MCF 10A (cell line): ENCODE measurements at regions of chr6 and their contacts with region 1.

Region 1: GRCh38 chr6:27146706-27147505 is 100.6 kb upstream of the PRSS16 start:
- DNase-seq: peak; percentile 99
- H3K4me3 Mint-ChIP-seq: no peak overlapping the region
- H3K27ac Mint-ChIP-seq: no peak overlapping the region
- H3K4me1 Mint-ChIP-seq: no peaks in the 10 kb centered on the region
- H3K27me3 Mint-ChIP-seq: no peaks in the 10 kb centered on the region
- CTCF ChIP-seq: no peak

Region 2: GRCh38 chr6:26045065-26045927 is 1101.6 kb before region 1 on chr6:
- CTCF ChIA-PET with region 1: no interaction called
- POLR2A ChIA-PET with region 1: interaction called, 12 read pairs
- intact Hi-C with region 1: no loop called
- DNase-seq: peak; percentile 95
- H3K4me3 Mint-ChIP-seq: peak overlapping the region; percentile 80
- H3K27ac Mint-ChIP-seq: peak overlapping the region; percentile 86
- H3K4me1 Mint-ChIP-seq: peaks cover 16% of the 10 kb centered on the region
- H3K27me3 Mint-ChIP-seq: no peaks in the 10 kb centered on the region
- CTCF ChIP-seq: no peak

Region 3: DNA sequence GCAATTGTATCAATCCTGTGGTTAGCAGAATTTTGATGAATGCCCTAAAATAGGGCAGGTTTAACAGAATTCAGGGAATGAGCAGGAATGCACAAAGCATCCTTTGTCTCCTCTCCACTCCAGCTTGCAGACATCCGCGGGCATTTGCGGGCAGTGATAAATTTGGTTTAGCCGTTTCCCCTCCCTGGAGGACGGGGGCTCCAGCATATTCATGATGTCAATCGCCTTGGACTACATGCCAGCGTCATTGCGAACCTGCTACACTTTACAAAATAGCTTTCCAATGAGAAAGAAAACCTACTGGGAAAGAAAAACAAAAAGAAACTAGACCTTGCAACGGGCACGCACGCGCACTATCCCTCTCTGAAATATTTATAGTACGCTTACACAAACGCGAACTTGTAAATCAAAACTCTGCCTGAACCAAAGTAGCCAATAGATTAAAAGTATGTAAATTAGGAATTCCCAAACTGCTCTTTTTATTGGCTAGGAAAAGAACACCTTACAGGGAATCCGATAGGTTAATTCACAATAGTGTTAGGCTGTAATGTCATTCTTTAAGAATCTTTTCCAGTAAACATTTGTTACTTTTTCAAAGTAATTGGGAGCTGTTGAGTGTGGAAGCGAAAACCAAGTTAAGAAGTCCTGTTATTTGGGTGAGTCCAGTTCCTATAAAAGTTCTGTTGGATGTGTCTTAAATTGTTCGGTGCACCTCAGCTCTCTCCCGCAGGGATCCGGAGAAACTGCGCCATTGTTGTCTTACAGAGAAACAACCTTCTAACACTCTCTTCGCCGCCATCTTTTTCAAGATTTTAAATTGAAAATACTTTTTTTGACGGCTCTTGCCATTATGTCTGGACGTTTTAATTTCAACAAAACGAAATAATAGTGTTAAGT is 923.0 kb before region 1 on chr6:
- CTCF ChIA-PET with region 1: no interaction called
- POLR2A ChIA-PET with region 1: interaction called, 16 read pairs
- intact Hi-C with region 1: loop called (anchors 5 kb)
- DNase-seq: peak; percentile 91
- H3K4me3 Mint-ChIP-seq: no peak overlapping the region
- H3K27ac Mint-ChIP-seq: no peak overlapping the region
- H3K4me1 Mint-ChIP-seq: peaks cover 6% of the 10 kb centered on the region
- H3K27me3 Mint-ChIP-seq: no peaks in the 10 kb centered on the region
- CTCF ChIP-seq: no peak

Region 4: DNA sequence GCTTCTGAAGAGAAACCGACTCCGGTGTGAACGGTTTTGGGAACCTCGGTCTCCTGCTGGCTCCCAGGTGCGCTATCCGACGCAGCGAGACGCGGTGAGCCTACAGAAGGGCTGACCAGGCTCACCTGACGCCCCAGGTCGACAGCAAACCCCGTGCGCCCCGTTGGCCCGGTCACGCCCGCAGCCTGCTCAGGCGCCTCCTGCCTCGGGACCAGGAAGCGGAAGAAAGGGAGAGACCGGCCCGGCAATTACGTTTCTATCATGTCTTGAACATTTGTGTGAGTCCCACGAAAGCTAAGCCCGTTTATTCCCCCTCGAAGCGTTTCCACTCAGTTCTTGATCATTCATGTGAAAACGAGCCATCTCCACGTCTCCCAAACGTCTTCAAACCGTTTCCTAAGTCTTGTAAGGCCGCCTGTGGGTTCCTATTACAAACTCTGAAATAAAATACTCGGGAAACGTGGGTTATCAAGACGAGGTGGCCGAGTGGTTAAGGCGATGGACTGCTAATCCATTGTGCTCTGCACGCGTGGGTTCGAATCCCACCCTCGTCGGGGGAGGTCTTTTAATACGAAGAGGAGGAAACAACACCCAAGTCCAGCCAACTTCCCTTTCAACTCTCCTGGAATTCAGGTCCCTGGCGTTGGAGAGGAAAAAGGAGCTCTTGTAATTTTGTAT is 49.9 kb before region 1 on chr6:
- CTCF ChIA-PET with region 1: no interaction called
- POLR2A ChIA-PET with region 1: no interaction called
- intact Hi-C with region 1: no loop called
- DNase-seq: peak; percentile 67
- H3K4me3 Mint-ChIP-seq: peak overlapping the region; percentile 76
- H3K27ac Mint-ChIP-seq: peak overlapping the region; percentile 95
- H3K4me1 Mint-ChIP-seq: peaks cover 13% of the 10 kb centered on the region
- H3K27me3 Mint-ChIP-seq: no peaks in the 10 kb centered on the region
- CTCF ChIP-seq: no peak

Region 5: DNA sequence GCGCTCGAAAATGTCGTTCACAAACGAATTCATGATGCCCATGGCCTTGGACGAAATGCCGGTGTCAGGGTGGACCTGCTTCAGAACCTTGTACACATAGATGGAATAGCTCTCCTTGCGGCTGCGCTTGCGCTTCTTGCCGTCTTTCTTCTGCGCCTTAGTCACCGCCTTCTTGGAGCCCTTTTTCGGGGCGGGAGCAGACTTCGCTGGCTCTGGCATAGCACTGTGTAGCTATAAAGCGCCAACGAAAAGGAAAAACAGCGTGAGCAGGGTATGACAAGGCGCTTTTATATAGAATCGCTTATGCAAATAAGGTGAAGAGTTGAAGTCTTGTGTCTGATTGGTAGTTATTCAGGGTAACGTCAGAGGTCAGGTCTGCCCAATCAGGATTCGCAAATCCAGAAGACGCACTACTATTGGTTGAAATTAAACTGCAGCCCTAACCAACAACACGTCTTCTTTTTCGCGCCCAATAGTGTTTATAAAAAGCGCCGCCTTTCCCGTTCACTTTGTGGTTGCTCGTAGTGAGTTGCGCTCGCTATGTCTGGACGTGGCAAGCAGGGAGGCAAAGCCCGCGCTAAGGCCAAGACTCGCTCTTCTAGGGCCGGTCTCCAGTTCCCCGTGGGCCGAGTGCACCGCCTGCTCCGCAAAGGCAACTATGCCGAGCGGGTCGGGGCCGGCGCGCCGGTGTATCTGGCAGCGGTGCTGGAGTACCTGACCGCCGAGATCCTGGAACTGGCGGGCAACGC is 14.2 kb before region 1 on chr6:
- CTCF ChIA-PET with region 1: interaction called, 12 read pairs
- POLR2A ChIA-PET with region 1: interaction called, 621 read pairs
- intact Hi-C with region 1: loop called (anchors 1 kb)
- DNase-seq: peak; percentile 99
- H3K4me3 Mint-ChIP-seq: no peak overlapping the region
- H3K27ac Mint-ChIP-seq: no peak overlapping the region
- H3K4me1 Mint-ChIP-seq: peaks cover 11% of the 10 kb centered on the region
- H3K27me3 Mint-ChIP-seq: no peaks in the 10 kb centered on the region
- CTCF ChIP-seq: no peak

Region 6: DNA sequence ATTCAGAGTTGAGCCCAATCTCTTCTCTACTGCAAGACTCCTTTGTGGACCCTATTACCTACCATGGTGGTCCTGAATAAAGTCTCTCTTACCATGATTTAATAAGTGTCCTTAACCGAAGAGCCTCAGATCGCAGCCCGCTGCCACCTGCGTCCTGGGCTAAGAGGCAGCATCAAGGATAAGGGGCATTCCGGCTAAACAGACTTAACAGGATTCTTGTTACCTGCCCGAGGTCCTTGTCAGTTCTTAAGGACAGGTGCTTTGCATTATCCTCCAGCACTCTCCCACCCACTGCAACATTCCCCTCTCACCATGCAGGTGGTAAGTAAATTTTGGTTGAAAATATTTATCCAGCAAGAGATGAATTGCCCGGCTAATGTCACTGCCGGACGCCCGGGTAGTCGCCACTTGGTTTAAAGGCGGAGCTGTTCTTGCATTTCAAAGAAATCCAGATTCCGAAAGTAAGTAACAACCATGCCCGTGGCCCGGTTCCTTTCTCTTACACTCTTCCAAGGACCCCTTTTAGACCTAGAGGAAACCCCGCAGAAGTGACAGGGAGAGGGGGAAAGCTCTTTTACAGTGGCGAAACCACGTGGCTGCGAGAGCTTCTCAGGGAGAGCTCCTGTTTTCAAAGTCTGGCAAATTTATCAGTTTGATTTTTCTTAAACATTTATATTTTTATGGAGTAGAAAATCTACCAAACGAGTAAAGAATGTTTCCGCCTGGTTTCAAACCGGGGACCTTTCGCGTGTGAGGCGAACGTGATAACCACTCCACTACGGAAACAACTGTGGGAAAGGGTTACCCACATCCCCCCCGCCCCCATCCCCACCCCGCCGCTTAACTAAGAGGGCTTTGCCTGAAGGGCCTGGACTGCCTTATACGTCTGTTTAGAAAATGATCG is 58.7 kb after region 1 on chr6:
- CTCF ChIA-PET with region 1: no interaction called
- POLR2A ChIA-PET with region 1: no interaction called
- intact Hi-C with region 1: no loop called
- DNase-seq: no peak
- H3K4me3 Mint-ChIP-seq: no peak overlapping the region
- H3K27ac Mint-ChIP-seq: no peak overlapping the region
- H3K4me1 Mint-ChIP-seq: no peaks in the 10 kb centered on the region
- H3K27me3 Mint-ChIP-seq: no peaks in the 10 kb centered on the region
- CTCF ChIP-seq: no peak

Region 7: GRCh38 chr6:27472617-27473400 is 325.9 kb after region 1 on chr6 and contains the start of gene ZNF184:
- CTCF ChIA-PET with region 1: no interaction called
- POLR2A ChIA-PET with region 1: interaction called, 11 read pairs
- intact Hi-C with region 1: no loop called
- DNase-seq: peak; percentile 98
- H3K4me3 Mint-ChIP-seq: peak within 1 kb of the TSS; percentile 91
- H3K27ac Mint-ChIP-seq: peak within 1 kb of the TSS; percentile 83
- H3K4me1 Mint-ChIP-seq: peaks cover 25% of the 10 kb centered on the region
- H3K27me3 Mint-ChIP-seq: no peaks in the 10 kb centered on the region
- CTCF ChIP-seq: peak; percentile 17
- total RNA-seq, gene ZNF184: 8.9 and 10.1 TPM in 2 replicates

Region 8: GRCh38 chr6:27825025-27825793 is 678.3 kb after region 1 on chr6:
- CTCF ChIA-PET with region 1: no interaction called
- POLR2A ChIA-PET with region 1: interaction called, 39 read pairs
- intact Hi-C with region 1: no loop called
- DNase-seq: no peak
- H3K4me3 Mint-ChIP-seq: peak overlapping the region; percentile 94
- H3K27ac Mint-ChIP-seq: peak overlapping the region; percentile 95
- H3K4me1 Mint-ChIP-seq: peaks cover 10% of the 10 kb centered on the region
- H3K27me3 Mint-ChIP-seq: no peaks in the 10 kb centered on the region
- CTCF ChIP-seq: no peak

Region 9: GRCh38 chr6:27871924-27872638 is 725.2 kb after region 1 on chr6:
- CTCF ChIA-PET with region 1: no interaction called
- POLR2A ChIA-PET with region 1: interaction called, 50 read pairs
- intact Hi-C with region 1: no loop called
- DNase-seq: peak; percentile 89
- H3K4me3 Mint-ChIP-seq: peak overlapping the region; percentile 79
- H3K27ac Mint-ChIP-seq: peak overlapping the region; percentile 93
- H3K4me1 Mint-ChIP-seq: peaks cover 2% of the 10 kb centered on the region
- H3K27me3 Mint-ChIP-seq: no peaks in the 10 kb centered on the region
- CTCF ChIP-seq: no peak